HCT116 (cell line): ENCODE measurements at regions of chr11 and their contacts with region 1.

Region 1: DNA sequence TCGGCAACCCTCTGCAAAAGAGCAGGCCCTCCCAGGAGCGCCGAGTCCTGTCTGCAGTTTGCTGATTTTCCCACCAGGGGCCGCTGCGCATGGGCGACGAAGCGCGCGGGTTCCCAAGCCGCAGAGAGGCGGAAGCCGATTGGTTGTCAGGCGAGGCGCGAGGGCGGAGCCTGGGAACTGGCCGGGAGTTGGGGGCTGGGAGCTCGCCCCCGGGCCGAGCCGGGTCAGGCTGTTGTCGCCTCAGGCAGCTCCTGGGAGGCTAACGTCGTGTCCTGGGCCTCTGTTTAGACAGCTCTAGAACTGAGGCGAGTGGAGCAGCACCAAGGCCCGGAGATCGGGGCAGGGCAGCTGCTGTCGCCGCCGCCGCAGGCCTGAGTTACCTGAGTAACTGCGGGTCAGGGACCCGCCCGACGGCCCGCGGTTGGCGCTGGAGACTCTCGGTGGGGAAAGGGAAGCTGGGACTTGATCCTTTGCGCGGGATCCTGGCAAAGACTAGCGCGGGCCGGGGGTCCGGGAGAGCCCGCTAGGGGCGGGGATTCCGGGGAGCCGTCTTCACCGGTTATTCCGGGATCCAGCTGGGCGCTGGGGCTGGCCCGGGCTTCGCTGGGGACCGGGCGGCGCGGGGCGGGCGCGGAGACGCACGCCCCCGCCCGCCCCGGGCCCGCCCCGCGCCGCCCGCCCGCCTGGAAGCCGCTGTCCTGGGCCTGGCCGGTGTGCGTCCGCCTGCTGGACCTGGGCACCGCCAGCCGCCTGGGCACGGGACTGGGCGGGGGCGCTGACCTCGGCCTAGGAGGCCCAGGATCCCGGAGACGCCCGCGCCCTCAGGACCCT is at the start of gene STIM1:
- DNase-seq: peak; percentile 86
- ATAC-seq: peak; percentile 88
- H3K4me3 ChIP-seq: peak within 1 kb of the TSS; percentile 70 to 78
- H3K27ac ChIP-seq: peak within 1 kb of the TSS; percentile 61
- H3K4me1 ChIP-seq: peaks cover 14 to 31% of the 10 kb centered on the region in 2 experiments
- H3K27me3 ChIP-seq: no peaks in the 10 kb centered on the region
- CTCF ChIP-seq: peak; percentile 80 to 89 (median 83)
- POLR2A ChIP-seq: no peak
- RAD21 ChIP-seq: peak; percentile 86
- total RNA-seq, gene STIM1: 22.3 TPM

Region 2: GRCh38 chr11:3830730-3831129 is 24.5 kb before region 1 on chr11:
- CTCF ChIA-PET with region 1: no interaction called
- POLR2A ChIA-PET with region 1: no interaction called
- RAD21 ChIA-PET with region 1: no interaction called
- intact Hi-C with region 1: no loop called
- DNase-seq: no peak
- ATAC-seq: no peak
- H3K4me3 ChIP-seq: no peak overlapping the region
- H3K27ac ChIP-seq: no peak overlapping the region
- H3K4me1 ChIP-seq: 0 out of 4 replicates have a peak, but pooled peaks cover 0 to 2% of the 10 kb centered on the region in 2 experiments
- H3K27me3 ChIP-seq: no peaks in the 10 kb centered on the region
- CTCF ChIP-seq: no peak
- POLR2A ChIP-seq: no peak
- RAD21 ChIP-seq: no peak

Region 3: DNA sequence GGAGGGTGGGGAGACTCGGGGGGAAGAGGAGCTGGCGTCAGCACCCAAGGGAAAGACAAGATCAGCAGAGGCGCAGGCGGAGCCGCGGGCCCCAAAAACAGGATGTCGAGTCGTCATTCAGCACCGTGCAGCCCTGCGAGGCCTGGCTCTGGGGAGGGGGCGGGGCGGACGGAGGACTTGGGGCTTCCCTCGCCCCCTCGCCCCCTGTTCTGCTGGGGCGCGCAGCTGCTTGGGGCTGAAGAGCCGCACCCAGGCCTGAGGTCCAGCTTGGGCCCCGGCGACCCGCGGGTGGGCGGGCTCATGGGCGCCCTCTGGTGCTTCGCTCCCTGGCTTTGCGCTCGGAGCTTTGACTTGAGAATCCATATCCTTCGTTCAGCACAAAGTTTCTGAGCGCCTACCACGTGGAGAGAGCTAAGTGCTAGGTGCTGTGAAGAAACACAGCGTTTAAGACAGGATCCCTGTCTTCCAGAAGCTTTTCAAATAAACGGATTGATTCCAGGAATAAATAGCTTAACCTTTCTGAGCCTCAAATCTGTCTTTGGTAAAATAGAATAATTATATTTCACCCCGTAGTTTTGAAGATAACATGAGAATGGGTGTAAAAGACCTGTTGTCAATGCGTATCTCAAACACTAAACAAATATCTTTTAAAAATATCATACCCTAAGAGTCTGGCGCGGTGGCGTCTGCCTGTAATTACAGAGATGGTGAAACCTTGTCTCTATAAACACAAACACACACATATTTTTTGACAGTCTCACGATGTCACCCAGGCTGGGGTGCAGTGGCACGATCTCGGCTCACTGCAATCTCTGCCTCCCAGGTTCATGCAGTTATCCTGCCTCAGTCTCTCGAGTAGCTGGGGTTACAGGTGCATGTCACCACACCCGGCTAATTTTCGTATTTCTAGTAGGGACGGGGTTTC is 13.5 kb before region 1 on chr11:
- CTCF ChIA-PET with region 1: interaction called, 54 read pairs
- POLR2A ChIA-PET with region 1: interaction called, 3 read pairs
- RAD21 ChIA-PET with region 1: interaction called, 3 to 7 read pairs
- intact Hi-C with region 1: no loop called
- DNase-seq: peak; percentile 68
- ATAC-seq: peak; percentile 77
- H3K4me3 ChIP-seq: peak overlapping the region; percentile 67 to 78
- H3K27ac ChIP-seq: peak overlapping the region; percentile 72
- H3K4me1 ChIP-seq: peaks cover 14 to 48% of the 10 kb centered on the region in 2 experiments
- H3K27me3 ChIP-seq: no peaks in the 10 kb centered on the region
- CTCF ChIP-seq: peak; percentile 62 to 73 (median 72); a peak in 5 of 6 replicates
- POLR2A ChIP-seq: no peak
- RAD21 ChIP-seq: peak; percentile 55

Region 4: GRCh38 chr11:3873712-3874349 is 18.6 kb after region 1 on chr11:
- CTCF ChIA-PET with region 1: interaction called, 17 read pairs
- POLR2A ChIA-PET with region 1: interaction called, 3 read pairs
- RAD21 ChIA-PET with region 1: interaction called in 1 of 2 experiments, 3 read pairs
- intact Hi-C with region 1: no loop called
- DNase-seq: no peak
- ATAC-seq: no peak
- H3K4me3 ChIP-seq: no peak overlapping the region
- H3K27ac ChIP-seq: no peak overlapping the region
- H3K4me1 ChIP-seq: 0 out of 4 replicates have a peak, but pooled peaks cover 0 to 5% of the 10 kb centered on the region in 2 experiments
- H3K27me3 ChIP-seq: no peaks in the 10 kb centered on the region
- CTCF ChIP-seq: no peak
- POLR2A ChIP-seq: no peak
- RAD21 ChIP-seq: no peak

Region 5: GRCh38 chr11:3882655-3883054 is 27.5 kb after region 1 on chr11:
- CTCF ChIA-PET with region 1: interaction called, 10 read pairs
- POLR2A ChIA-PET with region 1: no interaction called
- RAD21 ChIA-PET with region 1: no interaction called
- intact Hi-C with region 1: no loop called
- DNase-seq: no peak
- ATAC-seq: no peak
- H3K4me3 ChIP-seq: no peak overlapping the region
- H3K27ac ChIP-seq: no peak overlapping the region
- H3K4me1 ChIP-seq: peaks cover 26 to 46% of the 10 kb centered on the region in 2 experiments
- H3K27me3 ChIP-seq: no peaks in the 10 kb centered on the region
- CTCF ChIP-seq: 0 out of 6 replicates have a peak, but pooled peaks of 1 of the 3 experiments have one; percentile 16
- POLR2A ChIP-seq: no peak
- RAD21 ChIP-seq: peak; percentile 20; the same call in 1 of the 2 replicates

Region 6: GRCh38 chr11:3959015-3959919 is 104.1 kb after region 1 on chr11:
- CTCF ChIA-PET with region 1: interaction called, 11 read pairs
- POLR2A ChIA-PET with region 1: no interaction called
- RAD21 ChIA-PET with region 1: no interaction called
- intact Hi-C with region 1: no loop called
- DNase-seq: no peak
- ATAC-seq: peak; percentile 57
- H3K4me3 ChIP-seq: no peak overlapping the region
- H3K27ac ChIP-seq: no peak overlapping the region
- H3K4me1 ChIP-seq: peaks cover 0 to 9% of the 10 kb centered on the region in 2 experiments; a peak in 2 of 4 replicates
- H3K27me3 ChIP-seq: no peaks in the 10 kb centered on the region
- CTCF ChIP-seq: peak; percentile 15 to 45 (median 40); a peak in 5 of 6 replicates
- POLR2A ChIP-seq: no peak
- RAD21 ChIP-seq: peak; percentile 30; the same call in 1 of the 2 replicates

Region 7: DNA sequence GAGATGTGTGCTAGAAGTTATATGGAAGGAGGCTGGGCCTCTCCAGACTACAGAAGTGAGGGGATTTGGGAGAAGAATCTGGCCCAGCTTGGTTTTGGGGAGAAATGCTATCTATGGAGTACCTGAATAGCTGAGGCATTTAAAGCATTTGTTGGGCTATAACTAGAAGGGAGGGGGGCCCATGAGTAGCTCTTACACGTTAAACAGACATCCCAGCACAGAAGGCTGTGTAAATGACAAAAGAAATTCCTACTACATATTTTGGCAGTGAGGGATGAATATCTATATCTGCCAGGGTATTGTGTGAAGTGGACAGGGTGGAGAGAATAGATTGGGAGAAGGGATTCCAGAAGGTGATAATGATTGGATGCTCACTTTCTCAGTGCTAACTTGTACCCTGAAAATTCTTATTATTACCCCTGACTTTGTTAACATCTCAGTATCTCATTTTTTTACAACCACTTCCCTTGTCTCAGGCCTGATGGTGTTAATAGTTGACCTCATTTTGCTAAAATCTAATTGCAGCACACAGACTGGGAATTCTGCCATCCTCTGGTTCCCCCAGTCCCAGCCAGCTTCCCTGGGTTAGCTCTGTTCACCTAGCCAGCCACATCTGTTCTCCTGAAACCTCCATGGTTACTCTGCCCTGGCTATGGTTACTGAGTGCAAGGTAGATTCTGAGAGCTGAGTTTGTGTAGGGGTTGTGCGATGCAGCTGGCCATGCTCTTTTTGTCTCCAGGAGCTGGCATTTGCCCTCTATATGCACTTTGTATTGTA is 210.6 kb after region 1 on chr11:
- CTCF ChIA-PET with region 1: interaction called, 152 read pairs
- POLR2A ChIA-PET with region 1: no interaction called
- RAD21 ChIA-PET with region 1: no interaction called
- intact Hi-C with region 1: no loop called
- DNase-seq: no peak
- ATAC-seq: no peak
- H3K4me3 ChIP-seq: no peak overlapping the region
- H3K27ac ChIP-seq: no peak overlapping the region
- H3K4me1 ChIP-seq: no peaks in the 10 kb centered on the region
- H3K27me3 ChIP-seq: no peaks in the 10 kb centered on the region
- CTCF ChIP-seq: no peak
- POLR2A ChIP-seq: no peak
- RAD21 ChIP-seq: no peak

Region 8: GRCh38 chr11:4916581-4916980 is 1061.4 kb after region 1 on chr11:
- CTCF ChIA-PET with region 1: no interaction called
- POLR2A ChIA-PET with region 1: no interaction called
- RAD21 ChIA-PET with region 1: no interaction called
- intact Hi-C with region 1: no loop called
- DNase-seq: no peak
- ATAC-seq: no peak
- H3K4me3 ChIP-seq: no peak overlapping the region
- H3K27ac ChIP-seq: no peak overlapping the region
- H3K4me1 ChIP-seq: no peaks in the 10 kb centered on the region
- H3K27me3 ChIP-seq: peaks cover 40% of the 10 kb centered on the region
- CTCF ChIP-seq: no peak
- POLR2A ChIP-seq: no peak
- RAD21 ChIP-seq: no peak